ENCODE measurements at regions of chr10 and their contacts with region 1.

Region 1: DNA sequence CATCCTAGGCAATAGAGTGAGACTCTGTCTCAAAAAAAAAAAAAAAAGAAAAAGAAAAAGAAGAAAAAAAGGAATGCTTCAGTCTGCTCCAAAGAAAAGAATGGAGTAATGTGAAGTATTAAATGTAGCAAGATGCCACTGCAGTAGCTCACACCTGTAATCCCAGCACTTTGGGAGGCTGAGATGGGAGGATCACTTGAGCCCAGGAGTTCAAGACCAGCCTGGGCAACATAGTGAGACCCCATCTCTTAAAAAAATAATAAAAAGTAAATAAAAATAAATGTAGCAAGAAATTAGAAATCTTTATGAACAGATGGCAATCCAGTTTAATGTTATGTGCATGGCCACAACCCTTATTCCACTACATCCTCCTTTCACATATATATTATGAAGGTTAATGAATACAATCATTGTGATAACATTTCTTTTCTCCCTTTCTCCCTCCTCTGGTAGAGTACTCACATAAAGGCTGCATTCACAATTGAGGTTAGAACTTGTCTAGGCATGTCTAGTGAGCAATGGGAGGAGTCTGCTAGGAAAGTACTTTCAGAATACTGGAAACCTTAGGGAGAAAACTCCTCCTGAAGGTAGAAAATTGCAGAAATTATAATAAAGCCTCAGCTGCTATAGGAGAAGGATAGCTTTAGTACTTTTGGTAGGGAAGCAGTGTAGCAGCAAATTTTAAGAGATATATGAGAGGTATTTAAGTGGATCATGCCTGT is 20.4 kb downstream of the KLLN start:
- DNase-seq: no peak
- ATAC-seq: peak; percentile 53
- H3K4me3 ChIP-seq: no peak overlapping the region
- H3K27ac ChIP-seq: peak overlapping the region; percentile 14
- H3K4me1 ChIP-seq: peaks cover 3% of the 10 kb centered on the region
- H3K27me3 ChIP-seq: no peaks in the 10 kb centered on the region
- CTCF ChIP-seq: no peak
- EP300 ChIP-seq: no peak
- POLR2A ChIP-seq: no peak
- RAD21 ChIP-seq: no peak

Region 2: GRCh38 chr10:87723500-87723899 is 119.4 kb before region 1 on chr10:
- CTCF ChIA-PET with region 1: no interaction called
- POLR2A ChIA-PET with region 1: no interaction called
- RAD21 ChIA-PET with region 1: no interaction called
- SMC1A ChIA-PET with region 1: no interaction called
- in situ Hi-C with region 1: no loop called
- intact Hi-C with region 1: no loop called
- DNase-seq: no peak
- ATAC-seq: no peak
- H3K4me3 ChIP-seq: no peak overlapping the region
- H3K27ac ChIP-seq: no peak overlapping the region
- H3K4me1 ChIP-seq: no peaks in the 10 kb centered on the region; the same call in 1 of the 2 replicates
- H3K27me3 ChIP-seq: no peaks in the 10 kb centered on the region
- CTCF ChIP-seq: no peak
- EP300 ChIP-seq: no peak
- POLR2A ChIP-seq: no peak
- RAD21 ChIP-seq: no peak

Region 3: DNA sequence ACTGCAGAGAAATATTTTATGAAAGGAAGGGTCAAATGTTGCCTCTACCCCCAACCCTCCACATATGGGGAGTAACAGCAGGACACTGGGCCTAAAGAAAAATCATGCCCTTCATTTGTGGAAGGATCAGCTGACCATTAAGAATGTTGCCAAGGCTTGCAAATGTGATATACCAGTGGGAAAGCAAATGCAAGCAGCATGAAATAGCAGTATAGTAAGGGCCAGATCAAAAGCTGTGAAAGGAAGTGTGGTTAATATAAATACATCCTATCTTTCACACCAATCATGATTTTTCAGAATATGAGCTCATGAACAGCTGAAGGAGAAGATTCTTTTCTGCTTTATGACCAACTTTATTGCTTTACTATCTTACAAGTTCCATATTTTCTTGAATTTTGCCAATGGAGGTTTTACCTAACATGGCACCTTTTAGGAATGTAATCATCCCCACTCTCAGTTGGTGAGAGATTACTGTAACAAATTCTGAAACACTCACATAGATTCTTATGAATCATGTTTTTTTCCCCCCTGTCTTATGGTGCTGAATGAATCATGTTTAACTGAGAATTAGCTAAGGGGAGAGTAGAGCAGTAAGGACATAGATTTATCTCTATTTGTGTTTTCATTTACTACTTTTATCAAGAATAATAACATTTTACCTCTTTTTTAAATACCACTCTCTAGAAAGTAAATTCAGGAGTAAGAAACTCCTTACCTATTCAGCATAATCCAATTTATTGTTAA is 12.8 kb before region 1 on chr10:
- CTCF ChIA-PET with region 1: interaction called, 4 read pairs
- POLR2A ChIA-PET with region 1: no interaction called
- RAD21 ChIA-PET with region 1: no interaction called
- SMC1A ChIA-PET with region 1: interaction called, 12 read pairs
- in situ Hi-C with region 1: no loop called
- intact Hi-C with region 1: no loop called
- DNase-seq: no peak
- ATAC-seq: peak; percentile 56
- H3K4me3 ChIP-seq: no peak overlapping the region
- H3K27ac ChIP-seq: no peak overlapping the region
- H3K4me1 ChIP-seq: no peaks in the 10 kb centered on the region
- H3K27me3 ChIP-seq: no peaks in the 10 kb centered on the region
- CTCF ChIP-seq: no peak
- EP300 ChIP-seq: no peak
- POLR2A ChIP-seq: no peak
- RAD21 ChIP-seq: no peak

Region 4: GRCh38 chr10:87991946-87992345 is 149.0 kb after region 1 on chr10:
- CTCF ChIA-PET with region 1: no interaction called
- POLR2A ChIA-PET with region 1: no interaction called
- RAD21 ChIA-PET with region 1: no interaction called
- SMC1A ChIA-PET with region 1: no interaction called
- in situ Hi-C with region 1: no loop called
- intact Hi-C with region 1: no loop called
- DNase-seq: no peak
- ATAC-seq: no peak
- H3K4me3 ChIP-seq: no peak overlapping the region
- H3K27ac ChIP-seq: no peak overlapping the region
- H3K4me1 ChIP-seq: no peaks in the 10 kb centered on the region
- H3K27me3 ChIP-seq: no peaks in the 10 kb centered on the region
- CTCF ChIP-seq: no peak
- EP300 ChIP-seq: no peak
- POLR2A ChIP-seq: no peak
- RAD21 ChIP-seq: no peak

Region 5: GRCh38 chr10:88097536-88097935 is 254.6 kb after region 1 on chr10:
- CTCF ChIA-PET with region 1: no interaction called
- POLR2A ChIA-PET with region 1: no interaction called
- RAD21 ChIA-PET with region 1: no interaction called
- SMC1A ChIA-PET with region 1: no interaction called
- in situ Hi-C with region 1: no loop called
- intact Hi-C with region 1: no loop called
- DNase-seq: no peak
- ATAC-seq: no peak
- H3K4me3 ChIP-seq: no peak overlapping the region
- H3K27ac ChIP-seq: no peak overlapping the region
- H3K4me1 ChIP-seq: peaks cover 7% of the 10 kb centered on the region
- H3K27me3 ChIP-seq: no peaks in the 10 kb centered on the region
- CTCF ChIP-seq: no peak
- EP300 ChIP-seq: no peak
- POLR2A ChIP-seq: no peak
- RAD21 ChIP-seq: no peak

Measured in GM12878 (cell line).